Mammary epithelial cell (primary cell): ENCODE measurements at regions of chr16 and their contacts with region 1.

Region 1: GRCh38 chr16:86444261-86444660 is 66.1 kb upstream of the FOXF1 start:
- DNase-seq: no peak
- H3K4me3 ChIP-seq: no peak overlapping the region
- H3K27ac ChIP-seq: no peak overlapping the region
- H3K4me1 ChIP-seq: no peaks in the 10 kb centered on the region
- H3K27me3 ChIP-seq: no peaks in the 10 kb centered on the region
- CTCF ChIP-seq: no peak

Region 2: DNA sequence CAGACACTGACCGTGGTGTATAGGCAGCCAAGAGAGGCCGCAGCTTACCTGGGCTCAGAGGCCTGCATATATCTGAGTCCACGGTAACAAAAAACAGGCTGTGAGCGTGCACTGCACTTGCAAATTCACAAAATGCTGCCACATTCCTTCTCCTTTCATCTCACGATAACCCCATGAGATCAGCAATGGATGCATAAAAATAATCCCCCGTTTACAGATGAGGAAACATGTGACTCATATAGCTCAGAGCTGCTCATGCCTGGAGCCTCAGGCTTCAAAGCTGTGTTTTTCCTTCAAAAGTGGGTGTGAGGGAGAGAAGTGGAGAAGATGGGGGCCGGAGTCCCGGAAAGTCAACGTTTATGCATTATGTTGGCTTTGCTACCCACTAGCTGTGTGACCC is 52.3 kb before region 1 on chr16:
- CTCF ChIA-PET with region 1: no interaction called
- dilution Hi-C with region 1: loop called (anchors 5 kb)
- in situ Hi-C with region 1: no loop called
- intact Hi-C with region 1: no loop called
- DNase-seq: peak; percentile 30
- H3K4me3 ChIP-seq: no peak overlapping the region
- H3K27ac ChIP-seq: no peak overlapping the region
- H3K4me1 ChIP-seq: peaks cover 4% of the 10 kb centered on the region
- H3K27me3 ChIP-seq: no peaks in the 10 kb centered on the region
- CTCF ChIP-seq: no peak

Region 3: DNA sequence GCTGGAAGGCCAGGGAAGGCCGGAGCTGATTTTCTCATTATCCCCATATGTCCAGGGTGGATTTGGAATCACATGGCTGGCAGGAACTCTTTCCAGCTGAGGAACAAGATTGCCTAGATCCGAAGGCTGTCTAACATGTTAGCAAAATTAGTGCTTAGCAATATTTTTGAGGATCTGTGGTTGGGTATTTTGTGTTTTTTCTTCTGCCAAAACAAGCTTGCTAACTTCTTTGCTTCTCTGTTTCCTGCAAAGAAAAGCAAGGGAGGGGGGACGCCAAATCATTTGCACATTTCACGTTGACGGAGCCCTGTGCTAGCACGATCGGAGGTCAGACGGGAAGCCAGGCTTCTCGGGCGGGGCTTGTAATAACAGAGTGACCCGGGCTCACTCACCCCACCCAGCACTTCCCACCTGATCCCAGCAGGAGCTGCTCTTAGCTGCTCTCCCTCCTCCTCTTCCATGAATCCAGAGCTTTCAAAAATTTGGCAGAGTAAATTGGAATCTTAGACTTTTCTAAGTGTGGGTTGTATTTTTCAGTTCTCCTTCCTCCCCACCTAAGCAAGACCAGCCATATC is 32.8 kb after region 1 on chr16:
- CTCF ChIA-PET with region 1: no interaction called
- dilution Hi-C with region 1: loop called (anchors 5 kb)
- in situ Hi-C with region 1: no loop called
- intact Hi-C with region 1: no loop called
- DNase-seq: no peak
- H3K4me3 ChIP-seq: no peak overlapping the region
- H3K27ac ChIP-seq: no peak overlapping the region
- H3K4me1 ChIP-seq: no peaks in the 10 kb centered on the region
- H3K27me3 ChIP-seq: peaks cover 9% of the 10 kb centered on the region
- CTCF ChIP-seq: no peak